Head of caudate nucleus (tissue), 42 donors: ENCODE measurements at regions of chr6 and their contacts with region 1.

Region 1: GRCh38 chr6:10146723-10147451 is 268.0 kb downstream of the TFAP2A start:
- DNase-seq: peak in 35 of 42 donors; percentile 6 to 80 (median 50)

Region 2: GRCh38 chr6:10000541-10000940 is 146.3 kb before region 1 on chr6:
- intact Hi-C with region 1: no loop called
- DNase-seq: no peak

Region 3: DNA sequence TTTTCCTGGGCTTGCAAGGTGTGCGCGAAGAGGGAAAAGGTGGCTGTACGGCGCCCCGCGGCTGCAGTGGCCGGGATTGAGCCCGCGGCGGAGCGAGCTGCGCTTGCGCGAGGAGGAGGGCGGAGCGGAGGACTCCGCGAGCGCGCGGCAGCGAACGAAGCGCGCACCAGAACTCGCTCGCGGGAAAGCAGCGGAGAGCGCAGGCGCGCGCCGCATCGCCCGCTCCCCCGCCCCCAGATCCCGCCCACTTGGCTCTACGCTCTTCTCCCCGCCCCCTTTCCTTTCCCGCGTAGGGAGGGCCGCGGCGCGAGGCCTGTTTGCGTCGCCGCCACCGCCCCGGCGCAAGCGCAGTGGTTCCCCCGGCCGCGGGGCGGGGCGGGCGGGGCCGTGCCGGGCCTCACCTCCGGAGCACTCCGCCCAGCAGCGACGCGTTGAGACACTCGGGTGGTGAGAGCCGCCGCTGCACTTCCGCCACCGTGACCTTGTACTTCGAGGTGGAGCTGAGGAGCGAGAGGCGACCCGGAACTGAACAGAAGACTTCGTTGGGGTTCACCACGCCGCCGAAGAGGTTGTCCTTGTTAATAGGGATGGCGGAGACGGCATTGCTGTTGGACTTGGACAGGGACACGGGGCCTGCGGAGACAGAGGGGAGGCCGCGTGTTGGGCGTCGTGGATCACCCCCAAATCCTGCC is 257.4 kb after region 1 on chr6:
- intact Hi-C with region 1: loop called (anchors 10 kb)
- DNase-seq: peak; percentile 66 to 95 (median 86)